Activated naive CD4-positive, alpha-beta T cell treated with anti-CD3 and anti-CD28 coated beads for 36 hours (primary cell): ENCODE measurements at regions of chr12 and their contacts with region 1.

Region 1: DNA sequence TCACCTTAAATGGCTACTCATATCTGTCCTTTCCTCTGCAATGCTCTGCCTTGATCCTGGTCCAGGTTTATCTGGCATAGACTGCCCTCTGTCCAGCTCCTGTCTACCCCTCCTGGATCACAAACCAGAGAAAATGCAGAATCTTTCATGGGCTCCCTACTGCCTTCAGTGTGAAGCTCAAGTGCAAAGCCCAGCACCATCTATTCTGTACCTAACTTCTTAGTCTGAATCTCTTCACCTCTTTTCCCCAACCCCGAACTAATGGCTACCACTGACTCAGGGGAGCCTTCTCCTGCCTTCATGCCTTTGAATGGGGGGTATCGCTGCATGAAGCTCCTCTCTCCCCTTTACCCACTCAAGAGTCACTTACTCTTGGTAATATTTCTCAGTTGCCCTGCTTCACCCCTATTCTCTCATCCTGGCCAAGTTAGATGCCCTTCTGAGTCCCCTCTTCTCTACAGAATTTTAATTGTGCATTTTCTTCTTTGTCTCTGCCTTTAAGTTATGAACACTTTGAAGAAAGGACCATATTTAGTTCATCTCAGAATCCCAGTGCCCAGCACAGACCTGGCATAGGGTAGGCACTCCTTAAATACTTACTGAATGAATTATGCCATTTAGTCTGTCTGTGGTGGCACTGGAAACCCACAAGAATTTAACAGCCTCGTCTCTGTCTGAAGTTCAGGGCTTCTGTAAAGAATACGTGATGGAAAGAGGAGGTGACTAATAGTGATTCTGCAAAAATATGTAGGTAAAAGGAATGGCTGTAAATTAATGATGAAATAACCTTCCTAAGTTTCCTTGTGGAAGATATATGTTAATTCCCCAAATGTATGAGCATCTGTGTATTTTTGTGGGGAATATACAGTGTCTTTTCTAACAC is 191.3 kb upstream of the AMIGO2 start:
- DNase-seq: peak; percentile 63
- H3K4me3 Mint-ChIP-seq: peak overlapping the region; percentile 46
- H3K27ac Mint-ChIP-seq: peak overlapping the region; percentile 90
- H3K4me1 Mint-ChIP-seq: peaks cover 74% of the 10 kb centered on the region
- H3K27me3 Mint-ChIP-seq: no peaks in the 10 kb centered on the region

Region 2: GRCh38 chr12:47216150-47216677 is 54.8 kb before region 1 on chr12:
- CTCF ChIA-PET with region 1: interaction called, 5 read pairs
- intact Hi-C with region 1: loop called (anchors 1 kb)
- DNase-seq: peak; percentile 83
- H3K4me3 Mint-ChIP-seq: peak overlapping the region; percentile 94
- H3K27ac Mint-ChIP-seq: peak overlapping the region; percentile 100
- H3K4me1 Mint-ChIP-seq: peaks cover 12% of the 10 kb centered on the region
- H3K27me3 Mint-ChIP-seq: no peaks in the 10 kb centered on the region

Region 3: DNA sequence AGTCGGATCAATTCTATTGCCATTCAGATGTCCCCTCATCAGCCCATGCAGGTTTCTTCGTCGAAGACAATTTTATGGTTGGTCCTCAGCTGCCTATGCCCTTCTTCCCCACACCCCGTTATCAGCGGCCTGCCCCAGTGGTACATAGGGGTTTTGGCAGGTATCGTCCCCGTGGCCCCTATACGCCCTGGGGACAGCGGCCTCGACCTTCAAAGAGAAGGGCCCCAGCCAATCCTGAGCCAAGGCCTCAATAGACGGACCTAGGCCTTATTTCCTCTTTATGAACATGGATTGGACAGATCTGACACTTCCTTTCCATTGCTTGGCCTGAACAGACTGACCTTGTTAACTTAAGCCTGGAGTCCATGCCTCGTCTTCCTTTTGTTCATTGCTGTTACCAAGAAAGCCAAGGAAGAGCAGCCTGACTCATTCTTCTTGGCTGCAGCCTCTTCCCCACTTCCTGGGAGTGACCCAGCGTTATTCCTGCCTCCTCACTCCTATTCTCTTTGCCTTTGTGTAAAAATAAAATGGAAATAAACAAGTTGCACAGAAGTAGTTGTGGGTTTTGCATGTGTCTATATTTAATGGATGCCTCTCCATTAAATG is 34.8 kb before region 1 on chr12:
- CTCF ChIA-PET with region 1: interaction called, 4 read pairs
- intact Hi-C with region 1: loop called (anchors 5 kb)
- DNase-seq: no peak
- H3K4me3 Mint-ChIP-seq: no peak overlapping the region
- H3K27ac Mint-ChIP-seq: peak overlapping the region; percentile 77
- H3K4me1 Mint-ChIP-seq: peaks cover 68% of the 10 kb centered on the region
- H3K27me3 Mint-ChIP-seq: no peaks in the 10 kb centered on the region

Region 4: DNA sequence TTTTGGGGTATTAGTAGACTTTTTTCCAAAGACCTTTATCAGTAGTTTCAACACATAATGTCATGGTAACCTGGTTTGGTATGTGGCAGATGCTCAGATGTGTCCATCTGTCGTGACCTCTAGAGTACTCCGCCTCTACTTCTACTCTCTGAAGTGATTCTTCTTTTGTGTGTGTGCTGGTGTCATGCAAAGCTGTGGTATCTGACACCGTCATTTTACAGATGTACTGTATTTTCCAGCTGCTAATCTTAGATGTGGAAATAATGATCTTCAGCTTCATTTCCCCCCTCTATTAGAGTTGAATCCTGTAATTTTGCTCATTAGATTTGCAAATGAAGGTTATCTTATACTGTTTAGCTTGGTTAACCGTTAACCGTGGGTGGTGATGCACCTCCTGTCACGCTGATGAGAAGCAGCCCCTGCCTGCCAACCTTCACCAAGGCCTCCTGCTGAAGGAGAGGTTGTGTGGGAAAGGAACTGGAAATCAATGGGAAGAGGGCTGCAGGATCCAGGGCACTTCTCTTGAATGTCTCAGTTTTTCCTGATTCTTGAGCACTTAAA is 31.2 kb after region 1 on chr12:
- CTCF ChIA-PET with region 1: interaction called, 4 read pairs
- intact Hi-C with region 1: loop called (anchors 1 kb)
- DNase-seq: no peak
- H3K4me3 Mint-ChIP-seq: peak overlapping the region; percentile 1
- H3K27ac Mint-ChIP-seq: peak overlapping the region; percentile 93
- H3K4me1 Mint-ChIP-seq: peaks cover 75% of the 10 kb centered on the region
- H3K27me3 Mint-ChIP-seq: no peaks in the 10 kb centered on the region

Region 5: GRCh38 chr12:47307680-47308399 is 36.8 kb after region 1 on chr12:
- CTCF ChIA-PET with region 1: interaction called, 4 read pairs
- intact Hi-C with region 1: loop called (anchors 1 kb)
- DNase-seq: peak; percentile 74
- H3K4me3 Mint-ChIP-seq: peak overlapping the region; percentile 91
- H3K27ac Mint-ChIP-seq: peak overlapping the region; percentile 98
- H3K4me1 Mint-ChIP-seq: peaks cover 73% of the 10 kb centered on the region
- H3K27me3 Mint-ChIP-seq: no peaks in the 10 kb centered on the region